Activated CD8-positive, alpha-beta T cell treated with anti-CD3 and anti-CD28 coated beads for 36 hours (primary cell): ENCODE measurements at regions of chr3 and their contacts with region 1.

Region 1: DNA sequence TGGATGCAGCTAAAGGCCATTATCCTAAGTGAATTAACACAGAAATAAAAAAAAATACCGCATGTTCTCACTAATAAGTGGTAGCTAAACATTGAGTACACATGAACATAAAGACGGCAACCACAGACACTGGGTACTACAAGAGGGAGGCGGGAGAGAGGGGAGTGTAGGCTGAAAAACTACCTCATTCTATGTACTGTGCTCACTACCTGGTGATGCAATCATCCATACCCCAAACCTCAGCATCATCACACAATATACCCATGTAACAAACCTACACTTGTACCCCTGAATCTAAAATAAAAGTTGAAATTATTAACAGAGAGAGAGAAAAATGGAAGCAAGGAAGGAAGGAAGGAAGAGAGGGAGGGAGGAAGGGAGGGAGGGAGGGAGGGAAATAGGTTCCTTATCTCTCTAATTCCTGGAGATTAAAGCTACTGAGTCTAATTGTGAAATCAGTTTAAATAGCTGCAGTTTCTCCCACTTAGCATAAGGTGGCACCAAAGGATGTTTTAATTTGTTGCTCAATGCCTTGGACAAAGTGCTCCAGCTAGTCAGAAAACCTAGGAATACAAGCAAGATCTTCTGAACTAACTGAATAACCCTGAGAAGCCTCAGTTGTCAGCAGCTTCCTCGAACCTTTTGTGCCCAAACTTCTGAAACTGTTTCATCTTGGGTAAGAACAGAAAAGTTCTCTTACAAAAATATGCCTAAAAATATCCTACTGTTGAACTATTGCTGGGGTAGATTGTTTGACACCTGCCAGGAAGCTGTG is 79.4 kb upstream of the ATP11B start:
- DNase-seq: no peak
- ATAC-seq: peak; percentile 78
- H3K4me3 Mint-ChIP-seq: no peak overlapping the region
- H3K27ac Mint-ChIP-seq: no peak overlapping the region
- H3K4me1 Mint-ChIP-seq: peaks cover 10% of the 10 kb centered on the region
- H3K27me3 Mint-ChIP-seq: peaks cover 2% of the 10 kb centered on the region
- CTCF ChIP-seq: peak; percentile 52

Region 2: DNA sequence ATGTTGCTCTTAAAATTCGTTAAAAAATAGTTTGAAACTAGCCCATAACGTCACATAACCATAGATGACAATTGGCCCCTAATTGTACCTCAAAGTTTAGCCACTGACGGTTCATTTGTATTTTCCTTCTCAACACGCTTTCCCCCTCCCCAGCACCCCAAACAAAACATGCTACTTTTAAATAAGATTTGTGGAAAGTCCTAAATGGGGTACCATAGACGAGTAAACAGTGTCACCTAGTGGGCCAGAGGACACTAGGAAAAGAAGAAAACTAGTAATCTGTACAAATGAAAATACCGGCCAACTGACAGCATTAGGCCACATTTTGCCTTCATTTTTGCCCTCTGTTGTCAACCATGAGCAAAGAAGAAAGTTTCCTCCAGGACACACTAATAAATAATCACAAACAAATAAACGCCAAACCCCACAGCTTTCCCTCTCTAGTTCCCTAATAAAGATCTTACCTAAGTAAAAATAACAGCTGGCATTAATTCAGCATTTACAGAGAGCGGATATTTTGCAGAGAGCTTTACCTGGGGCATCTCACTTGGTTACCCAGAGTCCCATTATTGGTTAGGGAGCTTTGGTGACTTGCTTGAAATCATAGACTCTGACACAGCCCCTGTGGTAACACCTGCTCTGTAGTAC is 95.7 kb before region 1 on chr3:
- CTCF ChIA-PET with region 1: no interaction called
- POLR2A ChIA-PET with region 1: no interaction called
- intact Hi-C with region 1: no loop called
- DNase-seq: peak; percentile 4
- ATAC-seq: no peak
- H3K4me3 Mint-ChIP-seq: no peak overlapping the region
- H3K27ac Mint-ChIP-seq: no peak overlapping the region
- H3K4me1 Mint-ChIP-seq: no peaks in the 10 kb centered on the region
- H3K27me3 Mint-ChIP-seq: peaks cover 10% of the 10 kb centered on the region
- CTCF ChIP-seq: no peak

Region 3: DNA sequence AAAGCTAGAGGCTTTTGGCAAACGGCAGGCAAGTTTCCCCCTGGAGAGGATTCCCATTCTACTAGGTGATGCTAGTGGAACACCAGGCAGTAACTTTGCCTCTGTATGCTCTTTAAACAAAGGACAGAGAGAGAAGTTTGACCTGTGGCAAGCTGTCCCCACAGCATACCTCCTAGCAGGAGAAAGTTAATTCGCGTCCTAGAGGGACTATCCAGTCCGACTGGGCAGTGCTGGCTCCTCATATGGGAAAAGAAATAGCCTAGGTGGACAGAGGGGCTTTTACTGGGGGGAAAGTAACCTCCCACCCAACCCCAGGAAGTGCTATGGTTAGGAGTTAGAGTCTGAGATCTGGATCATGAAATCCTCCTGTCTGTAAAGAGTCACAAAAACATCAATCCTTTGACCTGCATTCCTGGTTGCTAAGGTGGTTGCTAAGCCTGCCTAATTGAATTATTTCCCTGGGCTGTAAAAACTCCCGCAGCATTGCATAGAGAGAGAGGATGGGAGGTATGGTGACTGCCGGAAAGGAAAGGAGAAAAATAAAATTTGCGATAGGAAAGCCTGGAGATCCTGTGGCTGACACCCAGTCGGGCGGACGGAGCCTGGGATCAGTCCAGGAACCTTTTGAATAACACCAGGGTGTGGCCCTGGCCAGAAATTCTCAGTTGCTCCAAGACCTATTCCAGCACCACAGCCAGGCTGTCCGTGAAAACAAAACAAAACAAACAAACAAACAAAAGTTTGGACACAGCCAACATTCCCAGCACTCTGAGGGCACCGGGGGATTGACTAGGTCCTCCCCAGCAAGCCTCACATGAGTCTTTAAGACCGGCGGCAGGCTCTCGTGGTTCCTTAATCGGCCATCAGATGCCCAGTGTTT is 11.7 kb after region 1 on chr3:
- CTCF ChIA-PET with region 1: interaction called, 20 read pairs
- POLR2A ChIA-PET with region 1: interaction called, 3 read pairs
- intact Hi-C with region 1: no loop called
- DNase-seq: no peak
- ATAC-seq: no peak
- H3K4me3 Mint-ChIP-seq: no peak overlapping the region
- H3K27ac Mint-ChIP-seq: no peak overlapping the region
- H3K4me1 Mint-ChIP-seq: peaks cover 9% of the 10 kb centered on the region
- H3K27me3 Mint-ChIP-seq: peaks cover 7% of the 10 kb centered on the region
- CTCF ChIP-seq: no peak

Region 4: DNA sequence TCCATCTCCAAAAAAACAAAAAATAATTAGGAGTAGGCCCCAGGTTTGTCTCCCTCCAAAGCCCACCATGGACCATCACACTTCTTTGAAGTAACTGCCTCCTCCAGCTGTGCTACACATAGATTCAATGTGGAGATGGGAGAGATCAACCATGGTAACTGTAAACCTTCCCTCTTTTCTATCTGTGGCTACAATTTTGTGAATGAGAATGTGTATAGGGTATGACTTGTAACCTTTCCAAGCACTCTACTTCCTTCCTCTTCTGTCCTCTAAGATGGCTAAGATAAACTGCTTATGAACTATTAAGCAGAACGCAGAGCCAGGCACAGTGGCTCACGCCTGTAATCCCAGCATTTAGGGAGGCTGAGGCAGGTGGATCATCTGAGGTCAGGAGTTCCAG is 23.9 kb after region 1 on chr3:
- CTCF ChIA-PET with region 1: no interaction called
- POLR2A ChIA-PET with region 1: no interaction called
- intact Hi-C with region 1: no loop called
- DNase-seq: no peak
- ATAC-seq: no peak
- H3K4me3 Mint-ChIP-seq: no peak overlapping the region
- H3K27ac Mint-ChIP-seq: no peak overlapping the region
- H3K4me1 Mint-ChIP-seq: no peaks in the 10 kb centered on the region
- H3K27me3 Mint-ChIP-seq: peaks cover 7% of the 10 kb centered on the region
- CTCF ChIP-seq: no peak

Region 5: GRCh38 chr3:182837855-182838454 is 124.0 kb after region 1 on chr3:
- CTCF ChIA-PET with region 1: interaction called, 26 read pairs
- POLR2A ChIA-PET with region 1: no interaction called
- intact Hi-C with region 1: loop called (anchors 10 kb)
- DNase-seq: no peak
- ATAC-seq: no peak
- H3K4me3 Mint-ChIP-seq: no peak overlapping the region
- H3K27ac Mint-ChIP-seq: no peak overlapping the region
- H3K4me1 Mint-ChIP-seq: peaks cover 3% of the 10 kb centered on the region
- H3K27me3 Mint-ChIP-seq: no peaks in the 10 kb centered on the region
- CTCF ChIP-seq: peak; percentile 71

Region 6: DNA sequence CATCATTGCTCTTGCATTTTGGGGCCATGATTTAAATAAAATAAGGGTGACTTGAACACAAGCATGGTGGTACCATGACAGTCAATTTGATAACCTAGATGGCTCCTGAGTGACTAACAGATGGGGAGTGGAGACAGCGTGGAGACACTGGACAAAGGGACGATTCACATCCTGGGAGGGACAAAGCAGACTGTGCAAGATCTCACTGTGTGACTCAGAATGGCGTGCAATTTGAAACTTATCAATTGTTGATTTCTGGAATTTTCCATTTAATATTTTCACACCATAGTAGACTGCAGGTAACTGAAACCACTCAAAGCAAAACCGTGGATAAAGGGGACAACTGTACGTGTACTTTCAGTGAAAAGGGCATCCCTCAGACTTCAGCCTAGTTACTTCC is 359.9 kb after region 1 on chr3:
- CTCF ChIA-PET with region 1: no interaction called
- POLR2A ChIA-PET with region 1: no interaction called
- intact Hi-C with region 1: no loop called
- DNase-seq: peak; percentile 12
- ATAC-seq: peak; percentile 67
- H3K4me3 Mint-ChIP-seq: no peak overlapping the region
- H3K27ac Mint-ChIP-seq: no peak overlapping the region
- H3K4me1 Mint-ChIP-seq: peaks cover 16% of the 10 kb centered on the region
- H3K27me3 Mint-ChIP-seq: no peaks in the 10 kb centered on the region
- CTCF ChIP-seq: no peak